ENCODE measurements at regions of chr6 and their contacts with region 1.

Region 1: GRCh38 chr6:116461932-116462885 is 1.0 kb downstream of the CALHM6 start:
- DNase-seq: peak; percentile 68
- ATAC-seq: peak; percentile 84
- H3K4me3 Mint-ChIP-seq: peak overlapping the region; percentile 84
- H3K27ac Mint-ChIP-seq: peak overlapping the region; percentile 93
- H3K4me1 Mint-ChIP-seq: peaks cover 59% of the 10 kb centered on the region
- H3K27me3 Mint-ChIP-seq: no peaks in the 10 kb centered on the region
- CTCF ChIP-seq: no peak

Region 2: GRCh38 chr6:116100419-116101301 is 361.5 kb before region 1 on chr6 and contains the start of gene NT5DC1:
- CTCF ChIA-PET with region 1: no interaction called
- POLR2A ChIA-PET with region 1: no interaction called
- intact Hi-C with region 1: loop called (anchors 5 kb)
- DNase-seq: peak; percentile 86
- ATAC-seq: peak; percentile 92
- H3K4me3 Mint-ChIP-seq: peak within 1 kb of the TSS; percentile 88
- H3K27ac Mint-ChIP-seq: peak within 1 kb of the TSS; percentile 92
- H3K4me1 Mint-ChIP-seq: peaks cover 52% of the 10 kb centered on the region
- H3K27me3 Mint-ChIP-seq: no peaks in the 10 kb centered on the region
- CTCF ChIP-seq: no peak
- total RNA-seq, gene NT5DC1: 59.9 and 61.6 TPM in 2 replicates

Region 3: GRCh38 chr6:116371120-116371917 is 90.9 kb before region 1 on chr6:
- CTCF ChIA-PET with region 1: no interaction called
- POLR2A ChIA-PET with region 1: no interaction called
- intact Hi-C with region 1: loop called (anchors 1 kb)
- DNase-seq: peak; percentile 48
- ATAC-seq: peak; percentile 49
- H3K4me3 Mint-ChIP-seq: peak overlapping the region; percentile 90
- H3K27ac Mint-ChIP-seq: peak overlapping the region; percentile 69
- H3K4me1 Mint-ChIP-seq: peaks cover 26% of the 10 kb centered on the region
- H3K27me3 Mint-ChIP-seq: peaks cover 2% of the 10 kb centered on the region
- CTCF ChIP-seq: no peak

Region 4: DNA sequence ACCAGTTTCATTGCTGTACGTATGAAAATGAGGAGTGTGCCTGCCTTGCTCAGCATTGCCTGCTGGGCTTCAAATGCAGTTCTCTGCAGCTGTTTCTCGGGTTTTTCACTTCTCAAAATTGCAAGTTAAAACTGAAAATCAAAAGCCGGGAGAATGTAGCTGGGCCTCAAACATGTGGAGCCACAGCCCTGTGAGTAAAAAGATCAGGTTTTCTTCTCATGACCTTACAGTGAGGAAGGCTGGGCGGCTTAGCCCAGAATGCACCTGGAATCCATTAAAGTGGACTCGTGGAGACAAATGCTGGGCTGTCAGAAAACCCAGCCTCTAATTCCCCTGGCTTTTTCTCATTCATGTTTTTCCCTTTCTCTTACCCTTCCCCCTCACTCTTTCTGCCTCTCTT is 57.1 kb before region 1 on chr6:
- CTCF ChIA-PET with region 1: no interaction called
- POLR2A ChIA-PET with region 1: interaction called, 3 read pairs
- intact Hi-C with region 1: loop called (anchors 1 kb)
- DNase-seq: no peak
- ATAC-seq: peak; percentile 56
- H3K4me3 Mint-ChIP-seq: peak overlapping the region; percentile 67
- H3K27ac Mint-ChIP-seq: peak overlapping the region; percentile 92
- H3K4me1 Mint-ChIP-seq: peaks cover 59% of the 10 kb centered on the region
- H3K27me3 Mint-ChIP-seq: no peaks in the 10 kb centered on the region
- CTCF ChIP-seq: no peak

Region 5: GRCh38 chr6:116450769-116451740 is 11.2 kb before region 1 on chr6:
- CTCF ChIA-PET with region 1: interaction called, 3 read pairs
- POLR2A ChIA-PET with region 1: interaction called, 8 read pairs
- intact Hi-C with region 1: loop called (anchors 1 kb)
- DNase-seq: no peak
- ATAC-seq: peak; percentile 93
- H3K4me3 Mint-ChIP-seq: peak overlapping the region; percentile 6
- H3K27ac Mint-ChIP-seq: peak overlapping the region; percentile 70
- H3K4me1 Mint-ChIP-seq: peaks cover 31% of the 10 kb centered on the region
- H3K27me3 Mint-ChIP-seq: no peaks in the 10 kb centered on the region
- CTCF ChIP-seq: no peak

Region 6: DNA sequence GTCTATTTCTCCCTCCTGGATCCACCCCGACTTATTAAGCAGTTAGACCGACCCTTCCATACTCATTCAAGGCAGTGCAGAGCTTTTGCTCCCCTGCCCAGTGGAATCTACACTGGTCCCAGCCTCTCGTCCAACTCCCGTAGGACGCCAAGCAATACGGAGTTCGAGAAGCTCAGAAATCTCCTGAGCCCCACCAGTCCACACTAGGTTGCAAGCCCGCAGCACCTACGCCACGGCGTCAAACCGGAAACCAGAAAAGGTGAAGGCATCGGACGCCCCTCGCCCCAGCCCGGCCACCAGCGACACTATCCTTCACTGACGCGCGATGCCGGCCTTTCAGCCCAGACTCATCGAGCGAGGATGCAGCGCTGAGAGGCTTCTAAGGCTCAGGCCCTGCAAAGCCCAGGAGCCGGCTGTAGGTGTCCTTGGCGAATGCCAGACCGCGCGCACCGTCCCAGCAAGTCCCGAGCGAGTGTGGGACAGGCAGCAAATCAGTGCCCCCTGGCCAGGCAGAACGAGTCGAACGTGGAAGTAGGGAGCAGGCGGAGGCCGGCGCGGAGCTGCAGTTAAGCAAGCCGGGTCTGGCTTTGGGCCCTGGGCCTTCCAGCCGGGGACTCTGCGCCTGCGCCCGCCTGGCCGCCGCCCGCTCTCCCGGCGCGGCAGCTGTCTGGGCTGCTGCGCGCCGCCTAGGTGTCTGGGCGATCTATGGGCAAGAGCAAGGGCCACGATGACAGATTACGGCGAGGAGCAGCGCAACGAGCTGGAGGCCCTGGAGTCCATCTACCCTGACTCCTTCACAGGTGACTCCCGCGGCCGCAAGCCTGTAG is 108.9 kb after region 1 on chr6 and contains the start of gene RWDD1:
- CTCF ChIA-PET with region 1: no interaction called
- POLR2A ChIA-PET with region 1: interaction called, 4 read pairs
- intact Hi-C with region 1: loop called (anchors 2 kb)
- DNase-seq: peak; percentile 94
- ATAC-seq: peak; percentile 94
- H3K4me3 Mint-ChIP-seq: peak within 1 kb of the TSS; percentile 95
- H3K27ac Mint-ChIP-seq: peak within 1 kb of the TSS; percentile 96
- H3K4me1 Mint-ChIP-seq: peaks cover 51% of the 10 kb centered on the region
- H3K27me3 Mint-ChIP-seq: no peaks in the 10 kb centered on the region
- CTCF ChIP-seq: no peak
- total RNA-seq, gene RWDD1: 30.9 and 33.8 TPM in 2 replicates

Region 7: GRCh38 chr6:116680975-116681808 is 219.0 kb after region 1 on chr6 and contains the start of gene KPNA5:
- CTCF ChIA-PET with region 1: no interaction called
- POLR2A ChIA-PET with region 1: no interaction called
- intact Hi-C with region 1: loop called (anchors 5 kb)
- DNase-seq: peak; percentile 89
- ATAC-seq: peak; percentile 92
- H3K4me3 Mint-ChIP-seq: peak within 1 kb of the TSS; percentile 99
- H3K27ac Mint-ChIP-seq: peak within 1 kb of the TSS; percentile 99
- H3K4me1 Mint-ChIP-seq: peaks cover 40% of the 10 kb centered on the region
- H3K27me3 Mint-ChIP-seq: no peaks in the 10 kb centered on the region
- CTCF ChIP-seq: no peak
- total RNA-seq, gene KPNA5: 25.0 and 29.9 TPM in 2 replicates